CD14-positive monocyte (primary cell): ENCODE measurements at regions of chr3 and their contacts with region 1.

Region 1: DNA sequence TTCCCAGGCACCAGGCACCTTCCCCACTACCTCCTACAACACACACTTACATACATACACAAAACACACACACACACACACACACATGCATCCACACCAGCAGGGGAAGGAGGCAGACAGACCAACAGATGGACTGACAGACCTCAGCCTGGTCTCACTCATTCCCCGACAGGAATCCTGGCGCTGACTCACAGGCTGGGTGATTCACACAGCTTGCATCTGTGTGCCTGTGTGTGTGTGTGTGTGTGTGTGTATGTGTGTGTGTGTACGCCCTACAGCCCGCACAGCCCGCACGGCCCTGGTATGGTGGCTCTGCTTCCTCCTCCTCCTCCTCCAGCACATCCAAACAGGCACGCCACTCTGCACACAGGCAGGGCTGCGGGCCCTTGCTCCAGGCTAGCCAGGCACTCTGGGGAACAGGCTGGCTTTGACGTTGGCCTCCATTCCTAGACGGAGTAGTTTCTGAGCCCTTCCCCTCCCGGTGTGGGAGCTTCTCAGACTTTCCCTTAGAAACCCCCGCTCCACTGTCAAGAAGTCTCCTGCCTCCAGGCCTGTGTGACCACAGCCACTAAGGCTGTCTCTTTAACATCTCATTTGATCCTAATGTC is 6.3 kb downstream of the CSRNP1 start:
- DNase-seq: peak; percentile 94 to 97 (median 95)
- H3K4me3 ChIP-seq: peak overlapping the region; percentile 4 to 83 (median 20)
- H3K4me3 Mint-ChIP-seq: peak overlapping the region; percentile 98 to 100
- H3K27ac ChIP-seq: peak overlapping the region; percentile 93 to 97
- H3K27ac Mint-ChIP-seq: peak overlapping the region; percentile 94 to 99 (median 96)
- H3K4me1 ChIP-seq: peaks cover 73 to 83% of the 10 kb centered on the region in 2 donors
- H3K4me1 Mint-ChIP-seq: peaks cover 76% of the 10 kb centered on the region
- H3K27me3 ChIP-seq: no peaks in the 10 kb centered on the region
- H3K27me3 Mint-ChIP-seq: peaks cover 0 to 3% (median 0%) of the 10 kb centered on the region in 3 donors
- CTCF ChIP-seq: no peak

Region 2: GRCh38 chr3:38823722-38824121 is 323.4 kb before region 1 on chr3:
- intact Hi-C with region 1: no loop called
- DNase-seq: no peak
- H3K4me3 ChIP-seq: no peak overlapping the region
- H3K4me3 Mint-ChIP-seq: no peak overlapping the region
- H3K27ac ChIP-seq: no peak overlapping the region
- H3K27ac Mint-ChIP-seq: no peak overlapping the region
- H3K4me1 ChIP-seq: no peaks in the 10 kb centered on the region
- H3K4me1 Mint-ChIP-seq: no peaks in the 10 kb centered on the region
- H3K27me3 ChIP-seq: no peaks in the 10 kb centered on the region
- H3K27me3 Mint-ChIP-seq: peaks cover 0 to 2% (median 2%) of the 10 kb centered on the region in 3 donors
- CTCF ChIP-seq: no peak

Region 3: GRCh38 chr3:39107388-39108199 is 39.5 kb before region 1 on chr3 and contains the starts of genes GORASP1 and TTC21A:
- intact Hi-C with region 1: loop called in 1 of 2 experiments (anchors 2 kb)
- DNase-seq: peak; percentile 71 to 82 (median 78)
- H3K4me3 ChIP-seq: peak within 1 kb of the TSS; percentile 64 to 85 (median 81)
- H3K4me3 Mint-ChIP-seq: peak within 1 kb of the TSS; percentile 96
- H3K27ac ChIP-seq: peak within 1 kb of the TSS; percentile 64 to 82
- H3K27ac Mint-ChIP-seq: peak within 1 kb of the TSS; percentile 89 to 98 (median 95)
- H3K4me1 ChIP-seq: peaks cover 29 to 42% of the 10 kb centered on the region in 2 donors
- H3K4me1 Mint-ChIP-seq: peaks cover 54% of the 10 kb centered on the region
- H3K27me3 ChIP-seq: no peaks in the 10 kb centered on the region
- H3K27me3 Mint-ChIP-seq: peaks cover 5 to 16% (median 12%) of the 10 kb centered on the region in 3 donors
- CTCF ChIP-seq: no peak
- polyA plus RNA-seq, gene GORASP1: 23.2 to 105 (median 31.2) TPM
- polyA plus RNA-seq, gene TTC21A: 0.67 to 12.9 (median 2.2) TPM

Region 4: DNA sequence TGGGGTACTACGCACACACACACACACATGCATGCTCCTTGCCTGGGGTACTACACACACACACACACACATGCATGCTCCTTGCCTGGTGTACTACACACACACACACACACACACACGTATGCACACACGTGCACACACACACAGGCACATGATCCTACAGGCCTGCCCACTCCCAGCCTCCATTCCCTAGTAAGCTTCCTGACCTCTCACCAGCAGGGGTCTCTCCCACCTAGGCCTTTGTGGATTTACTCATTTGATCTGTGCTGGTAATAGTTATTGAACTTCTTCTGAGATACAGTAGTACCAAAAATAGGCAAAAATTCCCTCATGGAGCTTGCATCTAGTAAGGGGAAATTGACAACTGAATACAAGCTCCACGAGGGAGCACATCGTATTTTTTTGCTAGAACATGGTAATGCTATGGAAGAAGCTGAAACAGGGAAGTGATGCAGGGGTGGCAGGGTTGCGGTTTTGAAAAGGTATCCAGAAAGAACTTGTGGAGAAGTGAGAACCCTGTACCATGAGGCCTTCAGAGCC is 20.5 kb before region 1 on chr3:
- intact Hi-C with region 1: no loop called
- DNase-seq: peak in 2 of 3 donors; percentile 46 to 56
- H3K4me3 ChIP-seq: peak overlapping the region in 1 of 3 experiments; percentile 4
- H3K4me3 Mint-ChIP-seq: no peak overlapping the region
- H3K27ac ChIP-seq: peak overlapping the region in 1 of 2 donors; percentile 21
- H3K27ac Mint-ChIP-seq: peak overlapping the region in 6 of 7 donors; percentile 1 to 76 (median 62)
- H3K4me1 ChIP-seq: peaks cover 18% of the 10 kb centered on the region in 2 donors
- H3K4me1 Mint-ChIP-seq: peaks cover 24% of the 10 kb centered on the region
- H3K27me3 ChIP-seq: no peaks in the 10 kb centered on the region
- H3K27me3 Mint-ChIP-seq: peaks cover 4 to 7% (median 6%) of the 10 kb centered on the region in 3 donors
- CTCF ChIP-seq: peak; percentile 30